ENCODE measurements at regions of chr3 and their contacts with region 1.

Region 1: GRCh38 chr3:160163229-160163878 is 61.9 kb upstream of the C3orf80 start:
- DNase-seq: peak; percentile 15
- ATAC-seq: peak; percentile 70
- H3K4me3 ChIP-seq: no peak overlapping the region
- H3K27ac ChIP-seq: no peak overlapping the region
- H3K4me1 ChIP-seq: no peaks in the 10 kb centered on the region
- H3K27me3 ChIP-seq: peaks cover 4% of the 10 kb centered on the region; the same call in 1 of the 2 replicates
- CTCF ChIP-seq: peak; percentile 68; the same call in 1 of the 2 replicates

Region 2: DNA sequence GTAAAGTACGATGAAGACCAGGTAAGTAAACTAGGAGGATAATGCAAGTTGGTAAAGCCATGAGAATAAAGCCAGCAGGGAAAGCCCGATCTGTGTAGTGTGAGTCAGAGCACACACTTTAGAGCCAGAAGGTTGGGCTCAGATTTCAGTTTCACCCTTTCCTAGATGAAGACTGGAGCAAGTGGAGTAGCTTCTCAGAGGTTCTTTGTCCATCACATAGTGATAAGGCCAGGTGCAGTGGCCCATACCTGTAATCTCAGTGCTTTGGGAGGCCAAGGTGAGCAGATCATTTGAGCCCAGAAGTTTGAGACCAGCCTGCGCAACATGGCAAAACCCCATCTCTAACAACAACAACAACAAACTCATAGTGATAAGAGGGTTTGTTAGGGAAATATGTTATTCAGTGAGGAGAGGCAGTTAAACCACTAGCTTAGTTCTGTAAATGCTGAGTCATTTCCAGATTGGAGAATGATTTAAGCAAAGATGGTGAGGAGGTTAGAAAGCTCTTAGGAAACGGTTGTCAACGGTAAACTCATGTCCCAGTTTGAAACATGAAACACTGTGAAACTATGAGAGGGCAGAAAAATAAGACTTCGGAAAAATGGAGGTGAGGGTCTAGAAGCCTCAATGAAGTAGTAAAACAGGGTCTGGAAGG is 135.7 kb before region 1 on chr3:
- CTCF ChIA-PET with region 1: no interaction called
- POLR2A ChIA-PET with region 1: no interaction called
- in situ Hi-C with region 1: no loop called
- intact Hi-C with region 1: loop called (anchors 5 kb)
- DNase-seq: no peak
- ATAC-seq: peak; percentile 50; the same call in 1 of the 2 replicates
- H3K4me3 ChIP-seq: no peak overlapping the region
- H3K27ac ChIP-seq: no peak overlapping the region
- H3K4me1 ChIP-seq: no peaks in the 10 kb centered on the region
- H3K27me3 ChIP-seq: no peaks in the 10 kb centered on the region
- CTCF ChIP-seq: no peak

Region 3: DNA sequence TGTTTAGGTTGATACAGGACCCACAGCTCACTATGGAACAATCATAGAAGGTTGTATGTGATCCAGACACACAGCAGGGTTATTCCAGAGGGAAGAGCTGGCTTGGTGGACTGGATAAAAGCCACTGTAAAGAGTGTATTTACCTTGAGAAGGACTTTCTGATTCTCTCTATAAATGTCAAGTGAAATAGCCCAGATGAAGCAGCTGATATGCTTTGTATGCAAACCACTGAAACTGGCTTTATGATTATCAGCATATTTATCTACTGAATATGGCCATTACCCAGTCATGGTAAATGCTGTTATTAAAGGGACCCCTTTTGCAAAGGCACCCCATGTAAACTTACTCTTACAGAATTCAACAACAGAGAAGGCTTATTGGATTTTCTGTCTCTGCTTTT is 89.9 kb after region 1 on chr3:
- CTCF ChIA-PET with region 1: no interaction called
- POLR2A ChIA-PET with region 1: interaction called, 13 read pairs
- in situ Hi-C with region 1: no loop called
- intact Hi-C with region 1: no loop called
- DNase-seq: no peak
- ATAC-seq: no peak
- H3K4me3 ChIP-seq: no peak overlapping the region
- H3K27ac ChIP-seq: no peak overlapping the region
- H3K4me1 ChIP-seq: no peaks in the 10 kb centered on the region
- H3K27me3 ChIP-seq: peaks cover 6% of the 10 kb centered on the region; the same call in 1 of the 2 replicates
- CTCF ChIP-seq: no peak

Region 4: GRCh38 chr3:160343132-160343531 is 179.8 kb after region 1 on chr3:
- CTCF ChIA-PET with region 1: no interaction called
- POLR2A ChIA-PET with region 1: no interaction called
- in situ Hi-C with region 1: no loop called
- intact Hi-C with region 1: loop called (anchors 1 kb)
- DNase-seq: no peak
- ATAC-seq: no peak
- H3K4me3 ChIP-seq: no peak overlapping the region
- H3K27ac ChIP-seq: no peak overlapping the region
- H3K4me1 ChIP-seq: no peaks in the 10 kb centered on the region
- H3K27me3 ChIP-seq: no peaks in the 10 kb centered on the region
- CTCF ChIP-seq: peak; percentile 47; the same call in 1 of the 2 replicates

Region 5: GRCh38 chr3:160413613-160414248 is 250.4 kb after region 1 on chr3:
- CTCF ChIA-PET with region 1: interaction called, 8 read pairs
- POLR2A ChIA-PET with region 1: no interaction called
- in situ Hi-C with region 1: no loop called
- intact Hi-C with region 1: loop called (anchors 5 kb)
- DNase-seq: no peak
- ATAC-seq: peak; percentile 76
- H3K4me3 ChIP-seq: no peak overlapping the region
- H3K27ac ChIP-seq: no peak overlapping the region
- H3K4me1 ChIP-seq: no peaks in the 10 kb centered on the region
- H3K27me3 ChIP-seq: no peaks in the 10 kb centered on the region
- CTCF ChIP-seq: peak; percentile 85; the same call in 1 of the 2 replicates

Region 6: GRCh38 chr3:160486459-160486869 is 323.1 kb after region 1 on chr3:
- CTCF ChIA-PET with region 1: no interaction called
- POLR2A ChIA-PET with region 1: no interaction called
- in situ Hi-C with region 1: no loop called
- intact Hi-C with region 1: loop called (anchors 2 kb)
- DNase-seq: no peak
- ATAC-seq: no peak
- H3K4me3 ChIP-seq: no peak overlapping the region
- H3K27ac ChIP-seq: no peak overlapping the region
- H3K4me1 ChIP-seq: 0 out of 2 replicates have a peak, but pooled peaks cover 3% of the 10 kb centered on the region
- H3K27me3 ChIP-seq: no peaks in the 10 kb centered on the region
- CTCF ChIP-seq: peak; percentile 64; the same call in 1 of the 2 replicates